Posterior vena cava (tissue), 2 donors: ENCODE measurements at regions of chr6 and their contacts with region 1.

Region 1: DNA sequence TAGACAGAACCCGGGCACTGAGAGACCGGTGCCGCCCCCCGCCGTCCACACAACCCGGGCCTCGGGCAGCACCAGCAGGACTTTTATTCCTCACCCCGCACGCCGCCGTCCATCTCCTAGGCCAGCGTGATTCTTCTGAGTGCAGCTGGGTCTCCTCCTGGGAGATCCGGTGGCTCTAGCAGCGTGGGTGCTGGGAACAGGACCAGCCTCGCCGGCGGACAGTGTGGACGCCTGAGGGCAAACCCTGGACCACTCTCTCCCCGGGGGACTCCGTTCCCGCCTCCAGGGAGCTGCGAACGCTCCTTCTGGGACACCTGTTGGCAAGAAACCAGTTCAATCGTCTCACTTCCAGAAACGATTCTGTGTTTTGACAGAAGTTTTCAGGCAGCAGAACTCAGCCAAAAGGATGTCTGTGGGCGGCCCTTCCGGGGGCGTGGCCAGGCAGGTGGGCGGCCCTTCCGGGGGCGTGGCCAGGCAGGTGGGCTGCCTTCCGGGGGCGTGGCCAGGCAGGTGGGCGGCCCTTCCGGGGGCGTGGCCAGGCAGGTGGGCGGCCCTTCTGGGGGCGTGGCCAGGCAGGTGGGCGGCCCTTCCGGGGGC is 130.7 kb downstream of the DLL1 start:
- DNase-seq: peak; percentile 80

Region 2: GRCh38 chr6:170124833-170125232 is 35.3 kb before region 1 on chr6:
- intact Hi-C with region 1: loop called in 1 of 2 experiments (anchors 1 kb)
- DNase-seq: peak; percentile 41